Sigmoid colon (tissue), 7 donors: ENCODE measurements at regions of chr1 and their contacts with region 1.

Region 1: DNA sequence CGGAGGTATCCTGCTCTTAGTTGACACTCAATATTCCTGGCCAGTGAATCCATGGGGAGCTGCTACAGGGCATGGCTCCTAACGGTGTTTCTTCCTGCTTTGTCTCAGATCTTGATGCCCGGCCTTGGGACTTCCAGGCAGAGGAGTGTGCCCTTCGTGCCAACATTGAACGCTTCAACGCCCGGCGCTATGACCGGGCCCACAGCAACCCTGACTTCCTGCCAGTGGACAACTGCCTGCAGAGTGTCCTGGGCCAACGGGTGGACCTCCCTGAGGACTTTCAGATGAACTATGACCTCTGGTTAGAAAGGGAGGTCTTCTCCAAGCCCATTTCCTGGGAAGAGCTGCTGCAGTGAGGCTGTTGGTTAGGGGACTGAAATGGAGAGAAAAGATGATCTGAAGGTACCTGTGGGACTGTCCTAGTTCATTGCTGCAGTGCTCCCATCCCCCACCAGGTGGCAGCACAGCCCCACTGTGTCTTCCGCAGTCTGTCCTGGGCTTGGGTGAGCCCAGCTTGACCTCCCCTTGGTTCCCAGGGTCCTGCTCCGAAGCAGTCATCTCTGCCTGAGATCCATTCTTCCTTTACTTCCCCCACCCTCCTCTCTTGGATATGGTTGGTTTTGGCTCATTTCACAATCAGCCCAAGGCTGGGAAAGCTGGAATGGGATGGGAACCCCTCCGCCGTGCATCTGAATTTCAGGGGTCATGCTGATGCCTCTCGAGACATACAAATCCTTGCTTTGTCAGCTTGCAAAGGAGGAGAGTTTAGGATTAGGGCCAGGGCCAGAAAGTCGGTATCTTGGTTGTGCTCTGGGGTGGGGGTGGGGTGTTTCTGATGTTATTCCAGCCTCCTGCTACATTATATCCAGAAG is 16.7 kb downstream of the ALX3 start:
- DNase-seq: peak; percentile 80
- H3K4me3 ChIP-seq: no peak overlapping the region
- H3K27ac ChIP-seq: no peak overlapping the region
- H3K4me1 ChIP-seq: peaks cover 0 to 42% (median 34%) of the 10 kb centered on the region in 4 donors
- H3K27me3 ChIP-seq: no peaks in the 10 kb centered on the region
- CTCF ChIP-seq: peak; percentile 68 to 98 (median 86)
- EP300 ChIP-seq: no peak
- POLR2A ChIP-seq: no peak

Region 2: DNA sequence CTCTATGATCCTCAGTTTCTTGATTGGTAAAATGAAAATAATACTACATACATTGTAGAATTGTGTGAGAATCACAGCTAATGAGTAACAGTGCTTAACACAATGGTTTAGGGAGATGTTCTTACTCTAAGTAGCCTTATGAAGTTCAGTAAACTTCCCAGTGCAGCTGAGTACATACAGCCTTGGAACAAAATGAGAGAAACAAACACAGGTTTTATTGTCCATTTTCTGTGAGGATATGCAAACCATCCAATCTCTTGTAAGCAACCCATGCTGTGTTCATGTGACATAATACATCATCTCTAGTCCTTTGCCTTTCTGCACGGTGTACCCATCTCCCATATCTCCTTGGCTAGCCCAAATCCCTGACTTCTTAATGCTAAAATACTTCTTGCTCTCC is 34.0 kb before region 1 on chr1:
- intact Hi-C with region 1: no loop called
- DNase-seq: no peak
- H3K4me3 ChIP-seq: no peak overlapping the region
- H3K27ac ChIP-seq: no peak overlapping the region
- H3K4me1 ChIP-seq: no peaks in the 10 kb centered on the region
- H3K27me3 ChIP-seq: no peaks in the 10 kb centered on the region
- CTCF ChIP-seq: no peak
- EP300 ChIP-seq: no peak
- POLR2A ChIP-seq: no peak

Region 3: DNA sequence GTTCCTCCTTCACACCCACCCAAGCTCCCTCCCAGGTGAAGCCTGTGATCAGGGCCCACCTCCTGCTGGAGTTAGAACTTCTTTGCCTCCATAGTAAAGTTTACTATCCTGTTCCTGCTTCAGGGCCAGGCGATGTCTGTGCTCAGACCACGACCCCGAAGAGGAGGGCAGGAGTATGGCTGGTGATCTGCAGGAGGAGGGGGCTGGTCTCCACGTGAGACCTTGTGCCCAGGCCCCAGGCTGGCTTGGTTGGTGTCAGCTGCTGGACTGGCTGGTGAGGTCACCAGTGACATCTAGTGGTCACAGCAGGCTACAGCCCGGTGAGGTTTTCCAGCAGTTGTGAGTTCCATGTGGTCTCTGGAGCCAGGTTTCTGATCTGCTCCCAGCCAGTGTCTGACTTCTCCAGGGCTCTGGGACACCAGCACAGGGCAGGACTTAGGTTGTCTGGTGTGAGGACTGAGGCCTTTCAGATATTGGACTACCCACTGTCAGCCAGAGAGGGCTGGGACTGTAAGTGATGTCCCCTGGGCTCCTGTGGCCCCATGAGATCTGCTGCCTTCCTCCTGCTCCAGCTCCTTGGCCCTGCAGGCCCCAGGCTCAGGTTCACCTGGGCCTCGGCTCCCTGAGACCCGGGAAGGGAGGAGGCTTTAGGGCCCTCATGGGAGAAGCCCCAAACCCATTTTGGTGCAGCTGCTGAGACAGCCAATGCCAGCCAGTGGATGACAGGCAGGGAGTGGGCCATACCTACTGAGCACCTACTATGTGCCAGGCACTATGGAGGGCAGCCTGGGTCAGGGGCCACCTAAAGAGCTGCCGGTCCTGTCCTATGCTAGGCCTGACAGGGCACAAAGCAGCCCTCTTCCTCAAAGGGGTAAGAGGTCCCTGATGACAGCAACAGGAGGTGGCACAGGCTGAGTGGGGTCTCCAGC is 52.5 kb after region 1 on chr1:
- intact Hi-C with region 1: loop called (anchors 1 kb)
- DNase-seq: peak; percentile 82
- H3K4me3 ChIP-seq: no peak overlapping the region
- H3K27ac ChIP-seq: no peak overlapping the region
- H3K4me1 ChIP-seq: no peaks in the 10 kb centered on the region
- H3K27me3 ChIP-seq: no peaks in the 10 kb centered on the region
- CTCF ChIP-seq: peak; percentile 77 to 90 (median 80)
- EP300 ChIP-seq: no peak
- POLR2A ChIP-seq: no peak

Region 4: GRCh38 chr1:110210604-110211495 is 157.1 kb after region 1 on chr1:
- intact Hi-C with region 1: no loop called
- DNase-seq: peak; percentile 76
- H3K4me3 ChIP-seq: peak overlapping the region; percentile 52 to 83 (median 76)
- H3K27ac ChIP-seq: peak overlapping the region; percentile 76 to 90 (median 80)
- H3K4me1 ChIP-seq: peaks cover 0 to 30% (median 21%) of the 10 kb centered on the region in 4 donors
- H3K27me3 ChIP-seq: peaks cover 0 to 15% (median 0%) of the 10 kb centered on the region in 3 donors
- CTCF ChIP-seq: no peak
- EP300 ChIP-seq: no peak
- POLR2A ChIP-seq: no peak